ENCODE measurements at regions of chr19 and their contacts with region 1.

Region 1: DNA sequence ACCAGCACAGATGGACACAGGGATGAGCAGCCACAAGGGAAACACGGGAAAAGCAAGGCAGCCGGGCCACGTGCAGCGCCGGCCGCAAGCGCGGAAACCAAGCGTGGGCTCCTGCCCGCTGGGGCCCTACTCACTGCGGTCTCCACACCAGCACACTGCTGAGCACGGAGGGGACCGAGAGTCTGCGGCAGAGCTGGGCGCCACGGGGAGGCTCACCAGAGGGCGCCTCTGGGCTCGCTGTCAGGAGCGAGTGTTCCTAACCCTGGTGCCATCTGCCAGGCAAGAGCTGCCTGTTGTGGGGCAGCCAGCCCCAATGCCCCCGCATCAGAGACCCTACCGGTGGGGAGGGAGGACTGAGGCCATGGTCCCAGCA is 26.5 kb downstream of the MPND start:
- DNase-seq: peak; percentile 75
- H3K4me3 ChIP-seq: peak overlapping the region in 2 of 3 experiments; percentile 10 to 26
- H3K27ac ChIP-seq: peak overlapping the region; percentile 75
- H3K4me1 ChIP-seq: peaks cover 53% of the 10 kb centered on the region
- H3K27me3 ChIP-seq: no peaks in the 10 kb centered on the region
- CTCF ChIP-seq: peak; percentile 22 to 83

Region 2: DNA sequence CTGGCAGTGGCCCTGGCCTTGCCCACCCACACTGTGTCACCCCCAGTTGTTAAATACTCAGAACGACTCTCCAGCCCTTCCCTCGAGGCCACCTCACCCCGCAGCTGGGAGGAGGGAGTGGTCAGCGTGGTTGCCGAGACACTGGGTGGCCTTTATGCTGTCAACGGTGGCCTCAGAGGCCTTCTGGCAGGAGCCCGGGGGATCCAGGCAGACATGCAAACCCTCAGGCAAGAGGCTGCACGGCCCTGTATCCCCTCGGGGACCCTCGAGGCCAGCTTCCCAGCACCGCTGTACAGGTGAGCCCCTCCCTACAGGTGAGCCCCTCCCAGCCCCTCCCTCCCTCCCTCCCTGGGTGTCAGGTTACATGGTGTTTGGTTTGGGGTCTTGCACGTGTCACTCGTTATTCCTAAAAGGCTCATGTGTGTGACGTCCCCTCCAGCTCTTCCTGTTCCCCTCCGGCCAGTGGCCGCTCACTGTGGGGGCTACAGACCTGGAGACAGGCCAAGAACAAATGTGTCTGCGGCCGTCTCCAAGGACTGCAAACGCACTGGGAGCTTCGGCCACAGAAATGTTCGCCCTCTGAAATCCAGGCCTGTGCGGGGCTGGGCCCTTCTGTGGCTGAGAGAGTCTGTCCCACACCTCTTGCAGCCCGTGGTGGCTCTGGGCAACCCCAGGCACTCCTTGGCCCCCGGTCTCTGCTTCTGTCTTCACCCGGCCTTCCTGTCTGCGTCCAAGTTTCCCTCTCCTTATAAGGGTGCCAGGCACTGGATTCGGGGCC is 830.7 kb before region 1 on chr19 and contains the start of gene TEKTIP1:
- CTCF ChIA-PET with region 1: no interaction called
- dilution Hi-C with region 1: loop called (anchors 10 kb)
- in situ Hi-C with region 1: no loop called
- intact Hi-C with region 1: no loop called
- DNase-seq: no peak
- H3K4me3 ChIP-seq: no peak within 1 kb of the TSS
- H3K27ac ChIP-seq: no peak within 1 kb of the TSS
- H3K4me1 ChIP-seq: peaks cover 7% of the 10 kb centered on the region
- H3K27me3 ChIP-seq: no peaks in the 10 kb centered on the region
- CTCF ChIP-seq: no peak
- total RNA-seq, gene TEKTIP1: 1.9 TPM in 1 of 2 donors, not detected in the other

Region 3: DNA sequence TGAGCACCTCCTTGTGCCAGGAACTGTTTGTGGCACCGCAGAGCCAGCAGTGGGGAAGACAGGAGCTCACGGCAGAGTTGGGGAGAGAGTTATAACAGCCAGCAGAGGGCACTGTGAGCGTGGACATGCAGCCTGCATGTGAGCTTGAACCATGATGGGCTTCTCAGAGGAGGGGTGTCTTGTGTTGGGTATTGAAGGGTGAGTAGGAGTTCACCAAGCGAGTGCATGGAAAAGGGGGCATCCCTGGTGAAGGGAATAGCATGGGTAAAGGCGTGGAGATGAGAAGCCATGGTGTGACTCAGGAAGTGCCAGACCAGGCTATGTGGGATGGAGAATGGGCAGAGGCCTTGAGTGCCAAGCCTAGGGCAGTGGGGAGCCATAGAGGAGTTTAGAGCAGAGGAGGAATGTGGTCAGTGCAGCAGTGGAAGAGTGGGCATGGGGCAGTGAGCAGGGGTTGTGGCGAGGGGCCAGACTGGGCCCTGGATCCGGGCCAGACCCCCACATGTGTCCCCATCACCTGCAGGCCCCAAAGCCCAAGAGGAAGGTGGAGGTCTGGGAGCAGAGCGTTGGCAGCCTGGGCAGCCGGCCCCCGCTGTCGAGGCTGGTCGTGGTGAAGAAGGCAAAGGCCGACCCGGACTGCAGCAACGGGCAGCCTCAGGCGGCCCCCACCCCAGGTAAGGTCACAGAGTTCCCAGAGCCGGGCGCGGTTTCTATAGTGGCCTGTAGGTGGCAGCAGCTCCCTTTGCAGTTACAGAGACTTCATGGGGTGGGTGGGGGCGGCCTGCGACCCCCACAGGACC is 102.6 kb before region 1 on chr19:
- CTCF ChIA-PET with region 1: interaction called, 6 read pairs
- dilution Hi-C with region 1: loop called (anchors 5 kb)
- in situ Hi-C with region 1: loop called in 1 of 2 experiments (anchors 25 kb)
- intact Hi-C with region 1: no loop called
- DNase-seq: peak; percentile 42
- H3K4me3 ChIP-seq: no peak overlapping the region
- H3K27ac ChIP-seq: no peak overlapping the region
- H3K4me1 ChIP-seq: no peaks in the 10 kb centered on the region
- H3K27me3 ChIP-seq: no peaks in the 10 kb centered on the region
- CTCF ChIP-seq: peak; percentile 66 to 80

Region 4: GRCh38 chr19:4342615-4343369 is 27.1 kb before region 1 on chr19:
- CTCF ChIA-PET with region 1: no interaction called
- dilution Hi-C with region 1: no loop called
- in situ Hi-C with region 1: no loop called
- intact Hi-C with region 1: loop called (anchors 2 kb)
- DNase-seq: peak; percentile 100
- H3K4me3 ChIP-seq: peak overlapping the region; percentile 53 to 70 (median 62)
- H3K27ac ChIP-seq: peak overlapping the region; percentile 48
- H3K4me1 ChIP-seq: peaks cover 19% of the 10 kb centered on the region
- H3K27me3 ChIP-seq: no peaks in the 10 kb centered on the region
- CTCF ChIP-seq: peak in 1 of 2 donors; percentile 38

Region 5: DNA sequence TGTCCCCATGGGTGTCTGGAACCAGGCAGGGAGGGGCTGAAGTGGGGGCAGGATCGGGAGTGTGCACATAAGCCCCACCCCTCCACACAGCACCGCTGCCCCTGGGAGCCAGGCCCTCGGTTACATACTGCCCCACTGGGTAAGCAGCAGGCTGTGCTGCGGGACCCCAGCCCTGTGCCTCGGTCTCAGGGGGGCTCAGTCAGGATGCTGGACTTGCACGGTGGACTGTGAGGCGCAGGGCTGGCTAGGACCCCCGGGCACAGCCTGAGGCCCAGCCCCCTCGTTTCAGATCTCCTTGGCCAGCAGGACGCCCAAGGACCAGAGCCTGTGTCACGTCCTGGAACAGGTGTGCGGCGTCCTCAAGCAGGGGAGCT is 10.3 kb before region 1 on chr19:
- CTCF ChIA-PET with region 1: no interaction called
- dilution Hi-C with region 1: no loop called
- in situ Hi-C with region 1: no loop called
- intact Hi-C with region 1: no loop called
- DNase-seq: no peak
- H3K4me3 ChIP-seq: no peak overlapping the region
- H3K27ac ChIP-seq: no peak overlapping the region
- H3K4me1 ChIP-seq: no peaks in the 10 kb centered on the region
- H3K27me3 ChIP-seq: no peaks in the 10 kb centered on the region
- CTCF ChIP-seq: no peak

Region 6: DNA sequence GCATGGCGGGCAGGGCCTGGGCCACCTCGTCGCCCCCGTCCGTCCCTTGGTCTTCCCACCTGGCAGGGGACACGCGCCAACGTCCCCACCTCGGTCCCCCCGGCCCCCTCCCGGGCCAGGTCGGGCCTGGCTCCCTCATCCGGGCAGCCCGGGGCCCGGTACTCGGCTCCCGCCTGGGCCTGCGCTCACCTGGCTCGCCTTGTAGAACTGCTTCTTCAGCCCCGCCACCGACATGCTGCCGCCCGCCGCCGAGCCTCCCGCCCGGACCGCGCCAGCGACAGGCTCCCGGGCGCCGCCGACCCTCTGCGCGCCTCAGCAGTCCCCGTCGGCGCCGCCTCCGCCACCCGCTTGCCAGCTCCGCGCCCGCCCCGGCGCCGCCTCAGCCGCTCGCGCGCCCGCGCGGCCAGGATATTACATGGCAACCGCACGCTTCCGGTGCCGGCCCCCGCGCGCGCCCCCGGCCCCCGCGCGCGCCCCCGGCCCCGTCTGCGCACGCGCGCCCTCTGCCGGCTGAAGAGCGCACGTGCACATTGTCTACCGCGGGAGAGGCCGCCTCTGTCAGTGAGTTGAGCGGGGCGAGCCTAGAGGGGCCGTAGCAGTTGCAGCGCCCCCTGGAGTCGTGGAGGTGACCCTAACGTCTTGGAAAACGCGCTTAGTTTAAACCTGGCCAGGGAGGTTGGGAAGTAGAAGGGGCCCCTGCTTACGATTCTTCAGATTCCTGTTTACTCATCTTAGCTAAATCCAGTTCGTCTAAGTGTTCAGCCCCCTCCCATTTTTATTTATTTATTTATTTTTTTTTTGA is 30.5 kb after region 1 on chr19 and contains the start of gene SH3GL1:
- CTCF ChIA-PET with region 1: no interaction called
- dilution Hi-C with region 1: no loop called
- in situ Hi-C with region 1: no loop called
- intact Hi-C with region 1: loop called (anchors 1 kb)
- DNase-seq: peak; percentile 75
- H3K4me3 ChIP-seq: peak within 1 kb of the TSS; percentile 75 to 96 (median 87)
- H3K27ac ChIP-seq: peak within 1 kb of the TSS; percentile 95
- H3K4me1 ChIP-seq: peaks cover 19% of the 10 kb centered on the region
- H3K27me3 ChIP-seq: no peaks in the 10 kb centered on the region
- CTCF ChIP-seq: peak; percentile 91 to 98
- total RNA-seq, gene SH3GL1: 80.5 to 149 TPM

Measured in mammary epithelial cell (primary cell).